ENCODE measurements at regions of chr6 and their contacts with region 1.

Region 1: DNA sequence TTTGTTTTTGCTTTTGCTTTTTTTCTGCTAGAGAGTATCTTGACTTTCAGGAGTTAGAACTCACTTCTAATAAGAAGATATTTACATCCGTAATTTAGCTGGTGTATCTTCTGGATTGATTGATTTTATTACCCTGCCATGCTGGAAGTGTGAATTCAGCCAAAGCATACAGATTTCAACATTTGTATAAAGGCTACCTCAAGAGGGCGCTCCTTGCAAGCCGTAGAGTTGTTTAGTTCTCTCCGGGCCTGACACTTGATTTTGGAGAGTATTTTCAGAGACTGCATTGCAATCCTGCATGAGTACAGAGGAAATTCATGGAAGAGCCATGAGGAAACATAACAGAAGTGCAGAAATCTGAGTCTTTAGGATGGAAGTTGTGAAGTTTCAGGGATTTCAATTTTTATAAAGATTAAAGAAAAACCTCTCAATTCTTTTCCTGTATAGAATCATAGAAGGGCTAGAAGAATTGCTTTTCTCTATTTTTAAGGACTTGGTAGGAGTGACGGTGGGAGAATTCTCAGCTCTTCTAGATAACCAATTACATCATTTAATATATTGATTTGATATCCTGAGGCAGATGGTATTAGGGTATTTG is 66.7 kb upstream of the TIAM2 start:
- DNase-seq: no peak
- ATAC-seq: no peak

Region 2: DNA sequence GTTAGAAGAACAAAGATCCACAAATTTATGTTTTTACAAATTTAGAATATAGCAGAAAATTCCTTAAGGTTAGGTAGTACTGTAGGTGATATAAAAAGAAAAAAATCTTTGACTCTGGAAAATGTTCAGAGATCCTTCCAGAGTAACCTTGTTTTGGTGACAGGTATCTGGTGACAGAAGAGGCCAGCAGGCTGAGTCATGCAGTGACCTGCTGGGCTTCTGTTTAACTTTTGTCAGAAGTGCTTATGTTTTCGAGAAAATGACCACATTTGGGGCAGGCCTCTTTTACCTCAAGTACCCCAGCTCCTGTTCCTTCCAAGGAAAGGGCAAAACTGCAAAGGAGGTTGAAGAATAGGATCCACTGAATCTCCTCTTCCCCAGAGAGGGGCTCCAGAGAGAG is 324.9 kb after region 1 on chr6:
- intact Hi-C with region 1: loop called (anchors 10 kb)
- DNase-seq: no peak
- ATAC-seq: peak; percentile 27